Stomach (tissue), 19 donors: ENCODE measurements at regions of chr11 and their contacts with region 1.

Region 1: DNA sequence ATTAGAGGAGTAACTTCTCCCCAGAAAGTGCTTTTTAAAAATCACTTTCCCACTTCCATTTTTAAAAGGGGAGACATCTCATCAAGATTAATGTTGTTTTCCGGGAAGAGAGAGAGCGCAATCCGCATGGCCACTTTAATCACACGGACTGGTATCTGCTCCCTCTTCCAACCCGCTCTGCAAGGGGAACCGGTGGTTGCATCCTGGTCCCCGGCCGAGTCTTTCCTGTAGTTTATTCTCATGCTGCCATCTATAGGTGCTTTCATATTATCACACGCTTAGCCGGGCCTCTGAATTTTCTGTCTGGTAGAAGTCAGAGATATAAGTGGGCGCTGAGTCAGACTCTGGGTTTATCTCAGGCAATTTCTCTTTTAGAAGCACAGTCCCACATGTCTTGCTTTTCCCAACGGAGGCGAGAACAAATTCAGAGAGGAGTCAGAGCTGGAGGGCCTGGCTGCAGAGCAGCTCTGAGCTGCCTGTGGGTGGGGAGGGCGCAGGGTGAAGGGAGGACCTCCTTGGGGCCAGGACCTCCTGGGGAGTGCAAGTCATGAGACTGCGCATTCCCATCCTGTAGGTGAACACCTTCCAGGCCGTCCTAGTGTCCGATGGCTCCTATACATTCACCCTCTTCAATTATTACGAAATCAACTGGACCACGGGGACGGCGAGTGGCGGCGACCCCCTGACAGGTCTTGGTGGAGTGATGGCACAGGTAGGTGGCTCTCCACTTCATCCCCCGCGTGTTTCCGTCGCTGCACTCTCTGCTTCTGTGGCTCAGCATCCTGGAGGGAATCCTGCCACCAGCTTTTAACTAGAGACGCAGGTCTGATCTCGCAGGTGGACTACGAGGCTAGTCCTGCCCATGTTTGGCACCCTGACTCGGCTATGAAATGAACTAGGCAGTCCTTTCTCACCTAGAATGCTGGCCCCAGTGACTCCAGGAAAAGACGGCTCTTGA is 11.7 kb downstream of the TECTA start:
- DNase-seq: peak; percentile 64 to 82
- H3K4me3 ChIP-seq: no peak overlapping the region
- H3K27ac ChIP-seq: no peak overlapping the region
- H3K4me1 ChIP-seq: peaks cover 0 to 7% (median 0%) of the 10 kb centered on the region in 4 donors
- H3K27me3 ChIP-seq: no peaks in the 10 kb centered on the region
- CTCF ChIP-seq: peak in 5 of 7 experiments; percentile 34 to 58 (median 43)
- EP300 ChIP-seq: no peak
- POLR2A ChIP-seq: no peak

Region 2: GRCh38 chr11:120929664-120930154 is 183.1 kb before region 1 on chr11:
- intact Hi-C with region 1: loop called (anchors 10 kb)
- DNase-seq: peak; percentile 36 to 78
- H3K4me3 ChIP-seq: no peak overlapping the region
- H3K27ac ChIP-seq: no peak overlapping the region
- H3K4me1 ChIP-seq: no peaks in the 10 kb centered on the region
- H3K27me3 ChIP-seq: peaks cover 0 to 13% (median 0%) of the 10 kb centered on the region in 3 donors
- CTCF ChIP-seq: peak in 2 of 7 experiments; percentile 25 to 44
- EP300 ChIP-seq: no peak
- POLR2A ChIP-seq: no peak